CD14-positive monocyte (primary cell): ENCODE measurements at regions of chr12 and their contacts with region 1.

Region 1: GRCh38 chr12:49201595-49202295 is 12.9 kb upstream of the TUBA1A start:
- DNase-seq: peak; percentile 47 to 53 (median 49)
- H3K4me3 ChIP-seq: peak overlapping the region in 1 of 3 experiments; percentile 45
- H3K4me3 Mint-ChIP-seq: peak overlapping the region in 1 of 2 donors; percentile 64
- H3K27ac ChIP-seq: peak overlapping the region in 1 of 2 donors; percentile 78
- H3K27ac Mint-ChIP-seq: peak overlapping the region; percentile 69 to 89 (median 87)
- H3K4me1 ChIP-seq: peaks cover 29 to 30% of the 10 kb centered on the region in 2 donors
- H3K4me1 Mint-ChIP-seq: peaks cover 23% of the 10 kb centered on the region
- H3K27me3 ChIP-seq: no peaks in the 10 kb centered on the region
- H3K27me3 Mint-ChIP-seq: no peaks in the 10 kb centered on the region
- CTCF ChIP-seq: no peak

Region 2: DNA sequence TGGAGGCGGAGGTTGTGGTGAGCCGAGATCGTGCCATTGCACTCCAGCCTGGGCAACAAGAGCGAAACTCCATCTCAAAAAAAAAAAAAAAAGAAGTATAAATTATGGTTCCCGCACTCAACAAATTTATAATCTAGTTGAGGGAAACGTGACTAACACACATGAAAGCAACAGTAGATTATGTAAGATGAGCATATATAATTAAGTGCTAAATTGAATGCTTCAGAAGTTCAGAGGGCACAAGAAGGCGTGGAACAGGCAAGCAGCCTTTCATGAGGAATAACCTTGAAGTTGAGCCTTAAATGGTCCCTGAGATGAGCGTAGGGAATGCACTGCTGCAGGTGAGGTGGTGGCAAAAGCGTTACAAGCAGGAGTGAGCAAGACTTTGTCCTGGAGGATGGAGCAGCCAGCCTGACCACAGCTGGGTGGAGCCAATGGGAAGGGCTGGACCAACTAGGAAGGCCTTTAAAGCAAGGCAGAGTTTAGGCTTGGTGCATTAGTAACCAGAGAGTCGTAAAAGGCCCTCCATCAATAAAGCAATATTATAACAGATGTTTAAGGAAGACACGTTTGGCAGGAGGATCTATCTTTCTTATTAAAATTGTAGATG is 17.8 kb after region 1 on chr12:
- intact Hi-C with region 1: loop called in 1 of 2 experiments (anchors 2 kb)
- DNase-seq: peak in 2 of 3 donors; percentile 19 to 27
- H3K4me3 ChIP-seq: no peak overlapping the region
- H3K4me3 Mint-ChIP-seq: no peak overlapping the region
- H3K27ac ChIP-seq: peak overlapping the region; percentile 51 to 69
- H3K27ac Mint-ChIP-seq: peak overlapping the region; percentile 82 to 97 (median 86)
- H3K4me1 ChIP-seq: peaks cover 60 to 64% of the 10 kb centered on the region in 2 donors
- H3K4me1 Mint-ChIP-seq: peaks cover 59% of the 10 kb centered on the region
- H3K27me3 ChIP-seq: no peaks in the 10 kb centered on the region
- H3K27me3 Mint-ChIP-seq: peaks cover 1 to 10% (median 2%) of the 10 kb centered on the region in 3 donors
- CTCF ChIP-seq: no peak

Region 3: DNA sequence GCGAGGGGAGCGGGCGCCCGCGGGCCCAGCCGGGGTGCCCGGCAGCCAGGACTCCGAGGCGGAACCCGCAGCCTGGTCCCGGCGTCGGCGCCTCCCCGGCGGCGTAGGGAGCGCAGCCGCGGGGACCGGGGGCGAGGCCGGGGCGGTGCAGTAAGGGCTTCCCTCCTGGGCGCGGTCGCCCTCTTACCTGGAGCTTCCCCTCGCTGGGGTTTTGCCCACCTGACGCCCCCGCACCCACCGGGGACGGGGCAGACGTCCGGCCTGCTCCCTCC is 62.7 kb after region 1 on chr12:
- intact Hi-C with region 1: no loop called
- DNase-seq: peak; percentile 14 to 38 (median 17)
- H3K4me3 ChIP-seq: peak overlapping the region; percentile 59 to 100 (median 92)
- H3K4me3 Mint-ChIP-seq: peak overlapping the region; percentile 87
- H3K27ac ChIP-seq: peak overlapping the region; percentile 55 to 96
- H3K27ac Mint-ChIP-seq: peak overlapping the region in 6 of 7 donors; percentile 67 to 93 (median 86)
- H3K4me1 ChIP-seq: peaks cover 56 to 72% of the 10 kb centered on the region in 2 donors
- H3K4me1 Mint-ChIP-seq: peaks cover 51% of the 10 kb centered on the region
- H3K27me3 ChIP-seq: no peaks in the 10 kb centered on the region
- H3K27me3 Mint-ChIP-seq: no peaks in the 10 kb centered on the region
- CTCF ChIP-seq: no peak